ENCODE measurements at regions of chr17 and their contacts with region 1.

Region 1: DNA sequence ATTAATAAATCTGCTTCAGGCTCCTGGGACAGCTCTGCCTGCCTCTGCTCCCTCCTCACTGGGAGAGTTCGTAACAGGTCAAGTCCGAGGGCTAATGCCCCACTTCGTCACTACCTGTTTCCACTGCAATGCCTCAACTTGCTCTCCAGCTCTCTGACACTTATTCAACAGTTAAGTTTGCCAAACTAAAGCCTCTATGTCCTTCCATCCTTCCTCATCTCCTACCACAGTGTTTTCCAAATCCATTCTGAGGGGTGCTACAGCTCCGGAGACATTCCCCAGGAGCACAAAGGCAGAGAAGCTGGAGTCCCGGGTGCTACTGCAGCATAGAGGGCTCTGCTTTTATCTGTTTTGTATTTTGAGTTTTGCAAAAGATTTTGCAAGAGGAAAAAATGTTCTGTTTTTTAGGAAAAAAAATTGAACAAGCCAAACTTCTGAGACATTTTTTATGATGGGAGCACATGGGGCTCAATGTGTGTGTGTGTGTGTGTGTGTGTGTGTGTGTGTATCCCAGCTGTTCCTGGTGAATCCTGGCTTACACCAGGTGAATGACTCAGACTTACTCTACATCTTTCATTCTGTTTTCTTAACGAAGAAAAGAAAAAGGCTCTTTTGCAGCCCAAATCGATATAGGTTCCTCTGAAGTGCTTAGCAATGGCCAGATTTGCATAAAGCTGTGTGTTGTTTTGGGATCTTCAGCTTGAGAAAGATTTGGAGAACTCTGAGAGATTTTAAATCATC is 46.1 kb upstream of the MYOCD start:
- DNase-seq: no peak
- ATAC-seq: no peak
- H3K4me3 ChIP-seq: no peak overlapping the region
- H3K27ac ChIP-seq: no peak overlapping the region
- H3K4me1 ChIP-seq: no peaks in the 10 kb centered on the region
- H3K27me3 ChIP-seq: no peaks in the 10 kb centered on the region

Region 2: GRCh38 chr17:12579288-12579687 is 40.3 kb before region 1 on chr17:
- intact Hi-C with region 1: loop called in 1 of 2 experiments (anchors 2 kb)
- DNase-seq: no peak
- ATAC-seq: no peak
- H3K4me3 ChIP-seq: peak overlapping the region in 1 of 2 donors; percentile 55
- H3K27ac ChIP-seq: no peak overlapping the region
- H3K4me1 ChIP-seq: peaks cover 0 to 2% of the 10 kb centered on the region in 2 donors
- H3K27me3 ChIP-seq: no peaks in the 10 kb centered on the region

Measured in aorta (tissue), 5 donors.